IMR-90 (cell line): ENCODE measurements at regions of chr7 and their contacts with region 1.

Region 1: GRCh38 chr7:1659696-1660095 is 10.4 kb upstream of the ELFN1 start:
- DNase-seq: peak; percentile 4
- ATAC-seq: no peak
- H3K4me3 ChIP-seq: no peak overlapping the region
- H3K27ac ChIP-seq: no peak overlapping the region
- H3K4me1 ChIP-seq: no peaks in the 10 kb centered on the region
- H3K27me3 ChIP-seq: peaks cover 48% of the 10 kb centered on the region
- CTCF ChIP-seq: no peak
- POLR2A ChIP-seq: no peak
- RAD21 ChIP-seq: no peak

Region 2: DNA sequence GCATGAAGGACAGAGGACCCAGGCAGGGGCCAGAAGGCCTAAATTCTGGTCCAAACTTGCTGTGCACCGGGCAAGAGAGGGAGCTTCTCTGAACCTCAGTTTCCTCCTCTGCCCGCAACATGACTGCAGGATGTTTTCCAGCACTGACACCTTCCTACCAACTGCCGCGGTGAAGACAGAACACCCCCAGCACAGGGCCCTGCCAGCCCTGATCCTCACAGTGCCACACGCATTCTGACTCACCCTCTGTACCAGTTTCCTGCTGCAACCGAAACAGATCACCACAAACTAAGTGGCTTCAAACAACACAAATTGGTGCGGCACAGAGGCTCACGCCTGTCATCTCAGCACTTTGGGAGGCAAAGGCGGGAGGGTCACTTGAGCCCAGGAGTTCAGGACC is 554.9 kb after region 1 on chr7:
- CTCF ChIA-PET with region 1: no interaction called
- POLR2A ChIA-PET with region 1: no interaction called
- dilution Hi-C with region 1: no loop called
- in situ Hi-C with region 1: loop called (anchors 10 kb)
- intact Hi-C with region 1: no loop called
- DNase-seq: no peak
- ATAC-seq: no peak
- H3K4me3 ChIP-seq: no peak overlapping the region
- H3K27ac ChIP-seq: no peak overlapping the region
- H3K4me1 ChIP-seq: no peaks in the 10 kb centered on the region
- H3K27me3 ChIP-seq: no peaks in the 10 kb centered on the region
- CTCF ChIP-seq: no peak
- POLR2A ChIP-seq: no peak
- RAD21 ChIP-seq: no peak